WTC11 (cell line): ENCODE measurements at regions of chr10 and their contacts with region 1.

Region 1: GRCh38 chr10:100053686-100054460 is 27.8 kb downstream of the CPN1 start:
- DNase-seq: no peak
- ATAC-seq: no peak
- H3K4me3 Mint-ChIP-seq: no peak overlapping the region
- H3K27ac Mint-ChIP-seq: no peak overlapping the region
- H3K4me1 Mint-ChIP-seq: peaks cover 6% of the 10 kb centered on the region
- H3K27me3 Mint-ChIP-seq: no peaks in the 10 kb centered on the region; the same call in 1 of the 2 replicates
- CTCF ChIP-seq: no peak

Region 2: DNA sequence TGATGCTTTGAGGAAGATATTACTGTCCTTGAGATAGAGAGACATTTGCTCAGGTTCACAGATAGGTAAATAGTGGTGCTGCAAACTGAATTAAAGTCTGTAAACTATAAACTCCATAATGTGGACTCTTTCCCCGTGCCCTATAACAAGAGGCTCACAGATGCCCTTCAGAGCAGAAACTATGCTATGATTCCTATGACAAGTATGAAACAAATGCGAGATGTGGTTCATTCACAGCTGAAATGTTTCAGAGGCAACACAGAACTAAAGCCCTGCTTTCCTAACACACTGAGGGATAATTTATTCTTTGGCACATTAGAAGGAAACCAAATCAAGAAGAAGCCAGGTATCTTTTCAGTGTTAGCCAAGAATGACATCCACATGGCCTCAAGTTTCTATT is 162.1 kb after region 1 on chr10:
- CTCF ChIA-PET with region 1: no interaction called
- POLR2A ChIA-PET with region 1: interaction called, 11 read pairs
- DNase-seq: no peak
- ATAC-seq: no peak
- H3K4me3 Mint-ChIP-seq: no peak overlapping the region
- H3K27ac Mint-ChIP-seq: no peak overlapping the region
- H3K4me1 Mint-ChIP-seq: no peaks in the 10 kb centered on the region
- H3K27me3 Mint-ChIP-seq: no peaks in the 10 kb centered on the region
- CTCF ChIP-seq: no peak